Left lung (tissue), 14 donors: ENCODE measurements at regions of chr17 and their contacts with region 1.

Region 1: DNA sequence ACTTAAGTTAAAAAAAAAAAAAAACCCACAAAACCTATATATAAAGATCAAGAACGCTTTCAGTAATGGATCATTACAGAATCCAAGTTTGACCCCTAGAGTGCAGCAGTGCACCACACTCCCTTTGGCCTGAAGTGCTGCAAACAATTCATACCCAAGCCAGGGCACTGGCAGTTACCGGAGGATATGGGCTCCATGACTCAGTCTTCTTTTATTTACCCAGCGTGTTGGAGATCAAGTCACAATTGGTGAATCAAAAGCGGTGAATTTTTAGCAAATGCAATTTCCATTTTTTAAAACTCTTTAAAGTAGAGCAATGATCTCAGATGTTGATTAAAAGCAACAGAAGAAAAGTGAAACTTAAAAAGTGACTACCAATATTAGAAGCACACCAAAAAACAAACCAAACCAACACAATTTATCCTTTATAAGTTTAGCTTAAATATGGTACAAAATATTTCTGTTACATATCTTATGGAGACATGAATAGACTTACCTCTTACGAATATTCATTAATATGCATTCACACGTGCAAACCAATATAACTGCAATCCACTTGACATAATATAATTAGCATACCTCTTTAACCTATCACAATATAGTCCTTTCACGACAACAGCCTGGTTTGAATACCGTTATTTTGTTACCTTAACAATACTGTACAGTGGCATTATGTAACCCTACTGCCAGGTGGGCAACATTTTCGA is 46.3 kb downstream of the ZNF652 start:
- DNase-seq: peak in 3 of 4 donors; percentile 56 to 78 (median 72)
- ATAC-seq: peak; percentile 100
- H3K4me3 ChIP-seq: no peak overlapping the region
- H3K27ac ChIP-seq: peak overlapping the region in 1 of 2 donors; percentile 84
- H3K4me1 ChIP-seq: peaks cover 2 to 38% of the 10 kb centered on the region in 2 donors
- H3K27me3 ChIP-seq: no peaks in the 10 kb centered on the region
- CTCF ChIP-seq: peak; percentile 69 to 74

Region 2: DNA sequence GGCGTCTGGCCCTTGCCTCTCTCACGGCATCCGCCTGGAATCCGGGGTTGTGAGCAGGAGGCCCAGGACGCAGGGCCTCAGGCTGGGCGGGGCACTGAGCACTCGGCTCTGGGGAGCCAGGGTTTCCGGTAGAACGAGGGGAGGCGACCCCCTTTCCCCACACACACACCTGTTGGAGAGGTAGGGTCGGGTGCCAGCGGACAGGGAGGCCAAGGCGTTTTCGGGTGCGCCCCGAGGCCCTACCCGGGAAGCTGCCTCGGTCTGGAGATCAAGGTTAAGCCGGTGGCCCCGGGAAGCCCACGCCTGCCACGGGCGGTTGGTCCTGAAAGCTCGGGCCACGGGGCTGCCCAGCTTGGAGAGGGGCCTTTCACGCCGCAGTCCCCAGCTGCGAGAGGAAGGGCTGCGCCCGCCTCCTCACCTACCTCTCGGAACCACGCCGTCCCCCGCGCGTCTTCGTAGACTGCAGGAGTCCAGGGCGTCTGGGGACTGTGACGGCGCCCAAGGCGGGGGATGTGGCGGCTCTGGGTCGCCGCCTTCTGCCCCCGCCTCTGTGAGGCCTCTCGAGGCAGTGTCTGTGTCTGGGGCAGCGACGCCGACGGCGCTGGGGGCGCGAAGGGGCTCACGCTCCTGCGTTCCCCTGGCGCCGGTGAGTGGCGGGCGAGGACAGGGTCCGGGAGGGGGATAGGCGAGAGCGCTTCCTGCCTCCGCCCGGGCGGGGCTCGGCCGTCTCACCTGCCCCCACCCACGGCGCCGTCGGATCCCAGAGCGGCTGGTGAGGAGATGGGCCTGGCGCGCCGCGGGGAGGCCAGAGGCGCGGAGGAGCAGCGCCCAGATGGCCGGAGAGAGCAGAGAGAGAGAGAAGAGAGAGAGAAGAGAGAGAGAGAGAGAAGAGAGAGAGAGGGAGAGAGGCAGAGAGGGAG is 669.3 kb before region 1 on chr17:
- intact Hi-C with region 1: no loop called
- DNase-seq: peak in 1 of 4 donors; percentile 77
- ATAC-seq: no peak
- H3K4me3 ChIP-seq: peak overlapping the region in 1 of 2 donors; percentile 34
- H3K27ac ChIP-seq: no peak overlapping the region
- H3K4me1 ChIP-seq: peaks cover 0 to 14% of the 10 kb centered on the region in 2 donors
- H3K27me3 ChIP-seq: peaks cover 81 to 100% of the 10 kb centered on the region in 2 donors
- CTCF ChIP-seq: no peak

Region 3: DNA sequence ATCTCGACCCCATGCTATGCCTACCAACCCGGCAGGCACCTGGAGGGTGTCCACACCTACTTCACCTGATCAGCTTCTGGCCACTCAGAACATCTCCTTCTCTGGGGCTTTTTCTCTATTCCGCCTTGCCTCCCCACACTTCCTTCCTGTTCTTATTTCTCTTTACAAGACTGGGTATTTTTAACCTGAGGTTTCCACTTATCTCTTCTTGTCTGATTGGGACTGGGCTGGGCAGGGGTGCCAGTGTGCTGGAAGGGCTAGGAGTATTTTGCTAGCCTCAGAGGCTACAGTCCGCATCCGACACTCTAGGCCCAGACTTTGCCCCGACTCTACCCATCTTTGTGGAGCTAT is 72.6 kb after region 1 on chr17:
- intact Hi-C with region 1: loop called in 1 of 2 experiments (anchors 10 kb)
- DNase-seq: no peak
- ATAC-seq: no peak
- H3K4me3 ChIP-seq: no peak overlapping the region
- H3K27ac ChIP-seq: peak overlapping the region in 1 of 2 donors; percentile 97
- H3K4me1 ChIP-seq: peaks cover 0 to 43% of the 10 kb centered on the region in 2 donors
- H3K27me3 ChIP-seq: no peaks in the 10 kb centered on the region
- CTCF ChIP-seq: no peak

Region 4: DNA sequence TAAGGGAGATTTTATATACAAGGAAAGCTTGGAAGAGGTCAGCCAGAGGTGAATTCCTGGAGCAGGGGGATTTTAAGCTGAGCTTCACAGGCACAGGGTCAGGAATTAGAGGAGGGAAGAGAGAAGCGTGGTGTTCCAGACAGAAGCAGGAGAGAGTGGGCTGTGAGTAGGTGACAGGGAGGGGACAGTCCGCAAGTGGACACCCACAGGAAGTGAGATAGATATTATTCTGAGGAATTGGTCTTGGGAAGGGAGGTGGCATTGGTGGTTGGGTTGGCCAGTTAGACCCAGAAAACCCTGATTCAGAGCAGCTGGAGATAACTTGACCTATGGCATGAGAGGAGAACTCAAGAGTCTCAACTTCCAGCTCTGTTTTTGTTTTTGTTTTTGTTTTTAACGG is 84.3 kb after region 1 on chr17:
- intact Hi-C with region 1: loop called in 1 of 2 experiments (anchors 2 kb)
- DNase-seq: no peak
- ATAC-seq: no peak
- H3K4me3 ChIP-seq: no peak overlapping the region
- H3K27ac ChIP-seq: no peak overlapping the region
- H3K4me1 ChIP-seq: peaks cover 0 to 28% of the 10 kb centered on the region in 2 donors
- H3K27me3 ChIP-seq: no peaks in the 10 kb centered on the region
- CTCF ChIP-seq: no peak